ENCODE measurements at regions of chr1 and their contacts with region 1.

Region 1: DNA sequence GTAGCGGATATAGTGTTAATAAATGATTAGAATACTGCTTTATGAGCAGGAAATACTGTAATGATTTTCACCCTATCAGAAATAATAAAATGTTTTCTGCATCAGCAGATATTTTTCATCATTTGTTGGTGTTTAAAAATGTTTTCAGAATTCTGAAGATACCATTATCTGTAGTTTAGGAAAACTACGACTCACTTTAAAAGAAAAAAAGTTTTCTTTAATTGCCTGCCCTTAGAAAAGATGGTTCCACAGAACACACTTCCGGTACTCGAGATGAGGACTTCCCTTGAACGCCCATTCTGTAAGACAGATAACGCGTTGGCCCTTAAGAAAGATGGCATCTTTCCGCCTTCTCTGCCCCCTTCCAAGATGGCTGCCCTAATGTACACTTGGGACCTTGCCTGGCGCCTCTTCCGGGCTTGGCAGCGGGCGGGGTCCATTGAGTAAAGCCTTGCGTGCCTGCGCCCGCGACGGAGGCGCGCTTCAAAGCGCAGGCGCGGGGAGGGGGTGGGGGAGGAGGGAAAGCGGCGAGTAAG is at the start of gene SZRD1:
- DNase-seq: peak; percentile 98
- H3K4me3 Mint-ChIP-seq: peak within 1 kb of the TSS; percentile 97
- H3K27ac Mint-ChIP-seq: peak within 1 kb of the TSS; percentile 99
- H3K4me1 Mint-ChIP-seq: peaks cover 44% of the 10 kb centered on the region
- H3K27me3 Mint-ChIP-seq: no peaks in the 10 kb centered on the region
- total RNA-seq, gene SZRD1: 156 to 157 TPM

Region 2: DNA sequence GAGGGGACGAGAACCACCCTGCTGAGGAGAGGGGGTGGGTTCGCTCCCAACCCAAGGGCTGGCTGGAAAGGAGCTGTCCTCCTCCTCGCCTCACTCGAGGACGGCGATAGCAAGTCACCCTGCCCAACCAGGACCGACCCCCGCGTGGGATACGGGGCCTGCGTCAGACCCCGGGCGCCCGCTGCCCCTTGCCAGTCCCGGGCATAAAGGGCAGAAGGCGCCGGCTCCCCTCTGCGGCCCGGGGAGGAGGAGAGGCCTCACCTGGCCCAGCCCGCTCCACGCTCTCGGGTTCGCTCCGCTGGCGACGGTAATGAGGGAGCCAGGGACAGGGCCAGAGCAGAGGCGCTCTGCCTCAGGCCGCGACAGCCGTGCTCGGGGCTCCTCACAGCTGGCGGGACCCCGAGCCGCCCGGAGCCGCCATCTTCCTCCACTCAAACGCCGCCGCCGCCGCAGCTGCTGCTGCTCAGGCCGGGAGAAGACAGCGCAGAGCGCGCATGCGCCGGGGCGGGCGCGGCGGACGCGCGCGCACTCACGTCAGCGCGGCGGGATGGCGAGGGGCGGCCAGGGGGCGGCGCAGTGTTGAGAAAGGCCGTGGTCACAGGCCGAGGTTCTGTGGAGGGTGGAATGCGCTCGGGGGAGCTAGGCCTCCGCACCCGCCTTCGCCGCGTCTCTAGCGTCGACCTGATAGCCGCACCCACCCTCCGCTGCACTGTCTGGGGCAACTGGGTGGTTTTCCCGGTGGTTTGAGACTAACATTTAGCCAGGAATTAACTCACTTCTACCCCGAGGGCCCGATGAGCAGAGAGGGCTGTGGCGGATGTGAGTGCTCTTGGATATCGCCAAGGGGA is 14.6 kb before region 1 on chr1 and contains the start of gene FBXO42:
- CTCF ChIA-PET with region 1: interaction called, 94 read pairs
- POLR2A ChIA-PET with region 1: interaction called, 109 read pairs
- DNase-seq: peak; percentile 94
- H3K4me3 Mint-ChIP-seq: peak within 1 kb of the TSS; percentile 86
- H3K27ac Mint-ChIP-seq: peak within 1 kb of the TSS; percentile 91
- H3K4me1 Mint-ChIP-seq: peaks cover 31% of the 10 kb centered on the region
- H3K27me3 Mint-ChIP-seq: no peaks in the 10 kb centered on the region
- total RNA-seq, gene FBXO42: 19.9 to 20.7 TPM

Region 3: DNA sequence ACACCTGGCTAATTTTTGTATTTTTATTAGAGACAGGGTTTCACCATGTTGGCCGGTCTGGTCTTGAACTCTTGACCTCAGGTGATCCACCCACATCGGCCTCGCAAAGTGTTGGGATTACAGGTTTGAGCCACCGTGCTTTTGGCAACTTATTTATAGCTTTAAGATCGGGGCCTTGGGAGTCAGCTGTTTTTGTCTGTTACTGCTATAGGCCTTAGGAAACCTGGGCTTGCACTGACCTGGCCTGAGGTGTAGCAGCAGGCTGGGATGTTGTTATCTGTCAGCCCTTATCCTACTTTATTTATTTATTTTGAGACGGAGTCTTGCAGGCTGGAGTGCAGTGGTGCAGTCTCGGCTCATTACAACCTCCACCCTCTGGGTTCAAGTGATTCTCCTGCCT is 11.7 kb after region 1 on chr1:
- CTCF ChIA-PET with region 1: interaction called, 13 read pairs
- POLR2A ChIA-PET with region 1: interaction called, 10 read pairs
- DNase-seq: no peak
- H3K4me3 Mint-ChIP-seq: no peak overlapping the region
- H3K27ac Mint-ChIP-seq: no peak overlapping the region
- H3K4me1 Mint-ChIP-seq: peaks cover 40% of the 10 kb centered on the region
- H3K27me3 Mint-ChIP-seq: no peaks in the 10 kb centered on the region

Region 4: GRCh38 chr1:16386454-16387113 is 19.8 kb after region 1 on chr1:
- CTCF ChIA-PET with region 1: interaction called, 3 read pairs
- POLR2A ChIA-PET with region 1: interaction called, 20 read pairs
- DNase-seq: no peak
- H3K4me3 Mint-ChIP-seq: peak overlapping the region; percentile 5
- H3K27ac Mint-ChIP-seq: peak overlapping the region; percentile 23
- H3K4me1 Mint-ChIP-seq: peaks cover 66% of the 10 kb centered on the region
- H3K27me3 Mint-ChIP-seq: no peaks in the 10 kb centered on the region

Region 5: DNA sequence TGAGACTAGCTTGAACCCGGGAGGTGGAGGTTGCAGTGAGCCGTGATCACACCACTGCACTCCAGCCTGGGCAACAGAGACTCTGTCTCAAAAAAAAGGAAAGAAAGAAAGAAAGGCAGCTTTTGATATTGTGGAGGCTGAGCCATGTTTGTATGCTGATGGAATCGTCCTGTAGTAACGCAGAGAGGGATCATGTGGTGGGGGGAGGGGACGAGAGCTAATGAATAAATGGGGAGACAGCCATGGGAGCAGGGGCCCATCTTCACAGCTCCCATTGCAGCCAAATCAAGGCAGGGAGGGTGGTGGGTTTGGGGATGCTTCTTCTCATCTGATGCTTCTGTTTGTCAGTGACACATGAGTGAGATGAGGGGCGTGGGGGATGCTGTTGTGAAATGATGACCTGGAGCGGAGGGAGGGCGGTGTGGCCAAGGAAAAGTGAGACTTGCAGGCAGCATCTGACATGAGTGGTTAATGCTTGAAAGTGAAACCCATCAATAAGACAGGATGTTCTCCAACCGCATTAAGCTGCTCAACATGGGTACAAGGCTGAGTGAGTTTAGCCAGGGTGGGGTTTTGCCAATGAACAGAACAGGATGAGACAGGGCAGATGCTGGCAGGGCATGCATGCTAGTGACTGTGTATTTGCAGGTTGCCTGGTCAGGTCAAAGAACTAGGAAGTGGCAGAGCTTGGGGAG is 53.8 kb after region 1 on chr1:
- CTCF ChIA-PET with region 1: interaction called, 3 read pairs
- POLR2A ChIA-PET with region 1: interaction called, 22 read pairs
- DNase-seq: peak; percentile 76
- H3K4me3 Mint-ChIP-seq: peak overlapping the region; percentile 38
- H3K27ac Mint-ChIP-seq: peak overlapping the region; percentile 94
- H3K4me1 Mint-ChIP-seq: peaks cover 38% of the 10 kb centered on the region
- H3K27me3 Mint-ChIP-seq: peaks cover 12% of the 10 kb centered on the region

Measured in activated CD4-positive, alpha-beta memory T cell treated with anti-CD3 and anti-CD28 coated beads, Interleukin-2, amount 10 ng/mL, durations not matched to agents 7 days and 5 days (primary cell).